ENCODE measurements at regions of chr1 and their contacts with region 1.

Region 1: GRCh38 chr1:179954493-179955297 is at the start of gene CEP350:
- DNase-seq: peak; percentile 99
- total RNA-seq, gene CEP350: 44.5 to 57.5 TPM

Region 2: DNA sequence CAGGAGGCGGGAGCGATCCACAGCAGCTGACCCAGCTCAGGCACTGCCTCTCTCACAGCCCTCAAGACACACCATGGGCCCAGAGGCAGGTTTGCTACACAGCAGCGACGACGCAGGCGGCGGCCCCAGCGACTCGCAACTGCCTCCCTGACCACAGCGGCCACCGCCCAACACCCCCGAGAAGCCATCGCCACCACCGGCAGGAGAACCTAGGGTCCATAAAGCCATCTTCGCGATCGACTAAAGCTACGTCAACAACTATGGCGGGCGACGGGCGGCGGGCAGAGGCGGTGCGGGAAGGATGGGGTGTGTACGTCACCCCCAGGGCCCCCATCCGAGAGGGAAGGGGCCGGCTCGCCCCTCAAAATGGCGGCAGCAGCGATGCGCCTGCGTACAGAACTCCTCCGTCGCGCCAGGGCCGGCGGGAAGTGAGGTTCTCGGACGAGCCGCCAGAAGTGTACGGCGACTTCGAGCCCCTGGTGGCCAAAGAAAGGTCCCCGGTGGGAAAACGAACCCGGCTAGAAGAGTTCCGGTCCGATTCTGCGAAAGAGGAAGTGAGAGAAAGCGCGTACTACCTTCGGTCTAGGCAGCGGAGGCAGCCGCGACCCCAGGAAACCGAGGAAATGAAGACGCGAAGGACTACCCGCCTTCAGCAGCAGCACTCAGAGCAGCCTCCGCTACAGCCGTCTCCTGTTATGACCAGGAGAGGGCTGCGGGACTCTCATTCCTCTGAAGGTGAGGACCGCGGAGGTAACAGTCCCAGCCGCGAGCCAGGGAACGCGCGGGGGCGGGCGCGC is 72.3 kb before region 1 on chr1 and contains the start of gene TOR1AIP1:
- intact Hi-C with region 1: loop called in 1 of 2 experiments (anchors 10 kb)
- DNase-seq: peak; percentile 99
- total RNA-seq, gene TOR1AIP1: 60.9 to 63.9 TPM

Measured in posterior vena cava (tissue), 2 donors.